Activated naive CD4-positive, alpha-beta T cell treated with anti-CD3 and anti-CD28 coated beads for 36 hours (primary cell): ENCODE measurements at regions of chr18 and their contacts with region 1.

Region 1: DNA sequence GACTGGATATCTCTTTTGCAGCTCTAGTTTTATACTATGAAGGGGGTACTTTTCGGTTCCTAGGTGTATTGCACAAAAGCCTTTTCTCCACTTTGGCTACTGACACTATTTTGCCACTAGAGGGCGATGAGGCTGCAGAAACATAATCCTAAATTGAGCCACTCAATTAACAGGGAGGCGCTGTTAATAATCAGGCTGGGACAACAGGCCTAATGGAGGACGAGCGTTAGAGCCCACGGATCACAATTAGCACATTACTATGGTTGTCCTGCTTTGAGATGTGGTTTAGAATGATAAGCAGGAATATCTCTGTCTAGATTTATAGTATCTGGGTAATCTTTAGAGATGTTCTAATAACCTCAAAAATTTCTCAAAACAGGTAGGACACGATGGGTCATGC is 62.2 kb upstream of the PMAIP1 start:
- DNase-seq: peak; percentile 70
- H3K4me3 Mint-ChIP-seq: no peak overlapping the region
- H3K27ac Mint-ChIP-seq: no peak overlapping the region
- H3K4me1 Mint-ChIP-seq: peaks cover 5% of the 10 kb centered on the region
- H3K27me3 Mint-ChIP-seq: no peaks in the 10 kb centered on the region

Region 2: DNA sequence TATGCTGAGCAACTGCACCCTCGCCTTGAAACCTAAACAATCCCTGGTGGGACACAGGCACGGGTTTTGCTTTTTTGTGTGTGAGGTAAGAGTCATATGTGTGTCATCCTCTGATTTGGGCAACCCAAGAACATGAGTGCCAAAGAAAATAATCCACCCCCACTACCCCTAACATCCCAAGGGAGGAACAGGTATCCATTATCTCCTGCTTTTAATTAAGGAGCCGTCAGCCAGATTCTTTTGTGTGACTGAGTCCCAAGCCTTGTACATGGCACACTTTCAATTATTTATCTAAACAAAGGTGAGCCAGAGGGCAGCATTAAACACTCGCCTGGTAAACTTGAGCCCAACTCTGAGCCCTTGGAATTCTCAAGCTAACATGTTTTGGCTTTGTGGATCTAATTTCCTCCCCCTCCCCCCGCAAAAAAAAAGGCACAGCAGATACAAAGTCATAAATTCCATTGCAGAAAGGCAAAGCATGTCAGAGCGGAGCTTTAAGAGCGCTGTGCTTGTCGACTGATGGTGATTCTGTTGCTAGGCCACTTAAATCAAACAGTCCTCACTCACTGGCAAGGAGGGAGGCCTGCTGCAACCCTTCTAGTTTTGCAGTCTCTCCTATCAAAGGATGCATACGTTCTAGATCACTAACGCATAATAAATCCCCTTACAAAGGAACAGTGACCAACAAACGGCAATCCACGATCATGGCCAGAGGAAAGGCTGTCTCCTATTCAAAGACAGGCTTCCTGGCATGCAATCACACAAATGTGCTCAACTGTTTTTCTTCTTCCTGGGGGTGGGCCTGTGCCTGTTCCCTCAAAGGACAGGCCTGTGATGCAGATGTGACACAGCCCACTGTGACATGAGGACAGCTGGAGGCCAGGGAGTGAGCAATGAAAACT is 335.1 kb before region 1 on chr18:
- CTCF ChIA-PET with region 1: no interaction called
- intact Hi-C with region 1: no loop called
- DNase-seq: no peak
- H3K4me3 Mint-ChIP-seq: no peak overlapping the region
- H3K27ac Mint-ChIP-seq: no peak overlapping the region
- H3K4me1 Mint-ChIP-seq: no peaks in the 10 kb centered on the region
- H3K27me3 Mint-ChIP-seq: peaks cover 9% of the 10 kb centered on the region

Region 3: GRCh38 chr18:59799383-59800015 is 38.1 kb before region 1 on chr18:
- CTCF ChIA-PET with region 1: no interaction called
- intact Hi-C with region 1: no loop called
- DNase-seq: no peak
- H3K4me3 Mint-ChIP-seq: no peak overlapping the region
- H3K27ac Mint-ChIP-seq: no peak overlapping the region
- H3K4me1 Mint-ChIP-seq: peaks cover 3% of the 10 kb centered on the region
- H3K27me3 Mint-ChIP-seq: peaks cover 3% of the 10 kb centered on the region

Region 4: DNA sequence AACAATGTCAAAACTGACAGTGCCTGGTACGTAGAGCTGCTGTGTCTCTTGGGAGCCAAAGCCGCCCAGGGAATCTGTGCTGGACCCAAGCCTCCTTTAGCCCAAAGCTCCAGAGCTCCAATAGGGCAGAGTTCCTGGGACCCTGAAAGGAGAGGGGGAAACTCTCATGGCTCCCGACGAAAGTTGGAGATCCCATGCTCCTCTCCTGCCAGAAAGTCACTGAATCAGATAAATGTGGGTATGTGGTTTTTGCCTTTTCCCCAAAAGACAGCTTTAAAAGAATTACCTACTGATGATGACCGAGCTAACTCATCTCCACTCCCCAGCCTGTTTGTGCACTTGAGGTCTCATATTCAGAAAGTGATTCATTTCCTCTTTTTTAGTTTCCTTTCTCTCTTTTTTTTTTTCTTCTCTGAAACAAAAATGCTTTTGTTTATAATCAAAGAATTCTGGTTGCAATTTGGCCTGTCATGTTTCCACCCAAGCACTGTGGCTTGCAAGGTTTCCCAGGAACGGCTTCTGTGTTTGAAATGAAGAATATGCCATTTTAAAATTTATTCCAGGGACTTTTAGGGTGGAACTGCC is 48.1 kb after region 1 on chr18:
- CTCF ChIA-PET with region 1: interaction called, 6 read pairs
- intact Hi-C with region 1: loop called (anchors 2 kb)
- DNase-seq: peak; percentile 59
- H3K4me3 Mint-ChIP-seq: peak overlapping the region; percentile 26
- H3K27ac Mint-ChIP-seq: peak overlapping the region; percentile 68
- H3K4me1 Mint-ChIP-seq: peaks cover 37% of the 10 kb centered on the region
- H3K27me3 Mint-ChIP-seq: no peaks in the 10 kb centered on the region

Region 5: DNA sequence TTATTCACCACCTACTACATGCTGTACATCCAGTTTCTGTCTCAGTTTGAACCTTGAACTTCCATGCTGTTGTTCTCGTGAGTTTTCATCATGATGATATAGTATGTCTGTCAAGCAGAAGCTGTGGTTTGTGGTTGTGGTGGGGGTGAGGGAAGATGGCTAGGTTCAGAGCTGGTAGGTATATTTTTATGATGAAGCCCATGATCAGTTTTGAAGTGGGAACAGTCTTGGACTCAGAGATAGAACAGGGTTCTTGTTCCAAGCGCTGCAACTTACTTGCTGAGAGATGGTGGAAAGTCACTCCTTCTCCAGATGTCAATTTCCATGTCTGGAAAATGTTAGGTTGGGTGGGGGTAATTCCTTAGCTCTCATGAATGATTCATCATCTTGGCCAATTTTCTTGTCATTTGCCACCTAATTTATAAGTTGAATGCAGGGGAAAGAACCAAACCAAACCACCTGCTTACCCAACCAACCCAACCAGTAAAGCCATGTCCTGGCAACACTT is 83.9 kb after region 1 on chr18:
- CTCF ChIA-PET with region 1: interaction called, 5 read pairs
- intact Hi-C with region 1: loop called (anchors 1 kb)
- DNase-seq: peak; percentile 82
- H3K4me3 Mint-ChIP-seq: no peak overlapping the region
- H3K27ac Mint-ChIP-seq: no peak overlapping the region
- H3K4me1 Mint-ChIP-seq: peaks cover 38% of the 10 kb centered on the region
- H3K27me3 Mint-ChIP-seq: peaks cover 6% of the 10 kb centered on the region

Region 6: DNA sequence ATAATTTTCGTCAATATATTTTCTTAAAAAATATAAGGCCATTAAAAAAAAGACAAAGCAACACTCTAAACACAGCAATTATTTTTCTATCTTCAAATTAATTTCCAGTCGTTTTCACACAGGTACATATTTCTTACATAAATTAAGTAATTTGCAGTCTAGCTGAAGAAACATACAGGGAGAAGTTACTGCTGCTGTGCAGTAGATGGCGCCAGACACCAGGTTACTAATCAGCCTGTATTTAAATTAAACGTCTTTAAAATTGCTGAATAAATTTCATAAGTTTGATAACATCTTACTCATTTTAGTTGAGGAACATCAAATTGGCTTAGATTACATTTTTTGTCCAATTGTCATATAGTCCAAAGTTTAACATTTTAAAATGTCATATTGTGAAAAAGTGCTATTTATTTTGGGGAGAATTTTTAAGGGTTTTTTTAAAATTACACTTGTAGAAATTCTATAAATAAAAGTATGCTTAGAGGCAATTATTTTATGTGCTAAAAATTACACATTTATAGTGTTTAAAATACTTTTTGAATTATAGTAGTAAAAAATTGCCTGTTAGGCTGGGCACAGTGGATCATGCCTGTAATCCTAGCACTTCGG is 150.6 kb after region 1 on chr18:
- CTCF ChIA-PET with region 1: interaction called, 16 read pairs
- intact Hi-C with region 1: loop called (anchors 2 kb)
- DNase-seq: peak; percentile 74
- H3K4me3 Mint-ChIP-seq: no peak overlapping the region
- H3K27ac Mint-ChIP-seq: no peak overlapping the region
- H3K4me1 Mint-ChIP-seq: no peaks in the 10 kb centered on the region
- H3K27me3 Mint-ChIP-seq: peaks cover 18% of the 10 kb centered on the region

Region 7: DNA sequence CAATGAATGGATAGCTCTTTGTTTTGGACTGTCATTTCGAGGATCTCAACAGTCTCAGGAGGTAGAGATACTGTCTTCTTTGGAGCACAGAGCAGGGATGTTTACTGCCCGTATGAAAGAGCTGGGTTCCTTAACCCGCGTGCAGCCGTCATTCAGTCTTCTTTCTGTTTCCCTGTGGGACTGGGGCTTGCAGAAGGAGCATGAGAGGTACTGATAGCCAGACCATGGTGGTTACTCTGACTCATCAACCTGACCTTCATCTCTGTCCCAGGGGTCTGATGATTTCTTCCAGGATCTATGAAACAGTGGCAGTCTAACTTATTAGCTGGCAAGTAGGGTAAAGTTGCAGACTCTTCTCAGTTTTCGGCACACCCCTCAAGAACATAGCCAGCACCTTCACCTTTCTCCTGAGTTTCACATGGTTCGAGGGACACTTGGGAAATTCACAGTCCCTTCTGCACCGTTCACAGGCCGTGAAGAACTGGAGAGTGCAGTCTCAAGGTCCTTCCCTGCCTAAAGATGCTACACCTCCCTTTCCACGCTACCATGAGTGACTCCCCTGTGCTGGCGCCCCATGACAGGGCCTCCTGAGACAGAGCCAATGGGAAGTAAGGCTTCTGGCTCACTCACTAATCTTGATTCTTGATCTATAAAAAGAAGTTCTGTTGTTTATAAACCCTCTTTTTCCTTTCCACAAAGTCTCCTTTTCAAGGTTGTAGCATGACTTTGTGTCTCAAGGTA is 308.8 kb after region 1 on chr18:
- CTCF ChIA-PET with region 1: no interaction called
- intact Hi-C with region 1: loop called (anchors 10 kb)
- DNase-seq: no peak
- H3K4me3 Mint-ChIP-seq: no peak overlapping the region
- H3K27ac Mint-ChIP-seq: no peak overlapping the region
- H3K4me1 Mint-ChIP-seq: no peaks in the 10 kb centered on the region
- H3K27me3 Mint-ChIP-seq: peaks cover 6% of the 10 kb centered on the region